RWPE1 (cell line): ENCODE measurements at regions of chr12 and their contacts with region 1.

Region 1: DNA sequence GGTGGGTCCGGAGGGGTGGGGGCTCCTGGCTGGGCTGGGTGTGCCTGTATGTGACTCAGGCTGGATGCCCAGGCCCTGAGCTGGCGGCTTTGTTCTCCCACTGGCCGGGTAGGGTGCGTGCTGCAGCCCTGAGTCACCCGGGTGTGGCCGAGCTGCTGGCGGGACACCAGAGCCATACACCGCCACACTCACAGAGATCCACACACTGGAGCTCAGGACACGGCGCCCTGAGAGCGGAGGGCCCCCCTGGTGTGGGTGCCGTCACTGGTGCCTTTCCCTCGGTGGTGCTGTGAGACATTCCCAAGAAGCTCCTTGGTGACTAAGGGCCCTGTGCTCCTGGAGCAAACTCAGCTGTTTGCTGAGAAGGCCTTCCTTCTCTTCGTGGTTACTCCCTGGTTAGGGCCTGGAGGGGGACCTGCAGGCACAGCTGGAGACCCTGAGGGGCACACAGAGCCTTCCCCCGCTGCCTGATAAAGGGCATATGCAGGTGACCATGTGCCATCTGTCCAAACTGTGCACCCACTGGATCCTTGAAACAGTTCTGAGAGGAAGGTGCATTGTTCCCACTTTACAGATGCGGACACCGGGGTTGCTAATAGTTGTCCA is 44.3 kb downstream of the KRT80 start:
- DNase-seq: peak; percentile 93
- H3K27ac ChIP-seq: peak overlapping the region; percentile 100
- CTCF ChIP-seq: no peak

Region 2: DNA sequence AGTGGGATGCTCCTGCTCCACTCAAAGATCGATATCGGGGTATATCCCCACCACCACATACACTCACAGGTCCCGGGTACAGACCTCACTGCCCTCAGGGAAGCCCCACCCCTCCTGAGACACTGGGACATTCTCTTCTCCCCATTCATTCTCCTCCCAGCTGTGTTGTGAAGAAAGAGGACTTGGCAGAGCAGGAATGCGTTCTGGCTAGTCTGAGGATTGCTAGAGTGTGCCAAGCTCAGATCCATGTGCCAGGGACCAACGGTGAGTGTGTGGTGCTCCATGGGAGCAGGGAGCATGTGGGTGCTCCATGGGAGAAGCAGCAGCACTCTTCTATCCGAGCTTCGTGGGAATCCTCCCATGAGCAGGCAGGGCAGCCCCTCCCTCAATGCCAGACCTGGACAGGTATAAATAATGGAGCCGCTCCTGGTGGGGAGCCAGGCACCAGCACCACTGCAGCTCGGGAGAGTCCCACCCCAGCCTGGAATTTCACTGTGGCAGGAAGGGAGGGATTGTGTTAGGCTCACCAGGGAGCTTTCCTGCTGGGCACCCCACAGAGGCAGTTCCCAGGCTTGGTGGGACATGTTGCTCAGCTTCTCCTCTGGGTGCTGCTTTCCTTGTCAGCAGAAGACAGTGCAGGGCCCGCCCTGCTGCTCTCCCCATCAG is 375.0 kb after region 1 on chr12:
- CTCF ChIA-PET with region 1: no interaction called
- POLR2A ChIA-PET with region 1: interaction called, 10 read pairs
- DNase-seq: peak; percentile 63
- H3K27ac ChIP-seq: peak overlapping the region; percentile 100
- CTCF ChIP-seq: no peak